IMR-90 (cell line): ENCODE measurements at regions of chr4 and their contacts with region 1.

Region 1: GRCh38 chr4:102620697-102621497 is 119.7 kb downstream of the NFKB1 start:
- DNase-seq: peak; percentile 82
- ATAC-seq: peak; percentile 89
- H3K4me3 ChIP-seq: peak overlapping the region; percentile 2; the same call in 1 of the 2 replicates
- H3K27ac ChIP-seq: no peak overlapping the region
- H3K4me1 ChIP-seq: peaks cover 7% of the 10 kb centered on the region
- H3K27me3 ChIP-seq: no peaks in the 10 kb centered on the region
- CTCF ChIP-seq: peak; percentile 72
- POLR2A ChIP-seq: no peak
- RAD21 ChIP-seq: peak; percentile 84

Region 2: DNA sequence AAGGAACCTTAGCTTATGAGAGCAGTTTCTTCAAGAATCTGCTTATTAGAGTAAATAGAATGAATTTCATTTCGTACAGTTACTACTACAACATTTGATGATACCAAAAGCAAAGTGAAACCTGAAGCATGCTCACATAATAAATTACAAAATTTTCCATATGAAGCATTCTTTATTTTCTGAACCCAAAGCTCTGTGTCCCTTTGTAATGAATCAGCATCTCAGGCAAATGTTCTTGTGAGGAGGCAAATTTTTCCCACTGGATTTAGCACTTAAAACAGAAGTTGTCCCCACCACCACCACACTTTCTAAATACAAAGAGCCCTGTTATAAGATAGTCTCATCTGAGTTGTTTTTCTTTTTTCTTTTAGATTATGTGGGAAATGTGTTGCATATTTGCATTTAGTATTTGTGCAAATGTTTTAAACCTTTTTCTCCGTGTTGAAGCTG is 190.4 kb before region 1 on chr4:
- CTCF ChIA-PET with region 1: interaction called, 4 read pairs
- POLR2A ChIA-PET with region 1: no interaction called
- dilution Hi-C with region 1: no loop called
- in situ Hi-C with region 1: no loop called
- intact Hi-C with region 1: loop called (anchors 5 kb)
- DNase-seq: peak; percentile 16
- ATAC-seq: peak; percentile 9
- H3K4me3 ChIP-seq: peak overlapping the region; percentile 61
- H3K27ac ChIP-seq: no peak overlapping the region
- H3K4me1 ChIP-seq: peaks cover 4% of the 10 kb centered on the region; the same call in 1 of the 2 replicates
- H3K27me3 ChIP-seq: no peaks in the 10 kb centered on the region
- CTCF ChIP-seq: no peak
- POLR2A ChIP-seq: no peak
- RAD21 ChIP-seq: no peak

Region 3: DNA sequence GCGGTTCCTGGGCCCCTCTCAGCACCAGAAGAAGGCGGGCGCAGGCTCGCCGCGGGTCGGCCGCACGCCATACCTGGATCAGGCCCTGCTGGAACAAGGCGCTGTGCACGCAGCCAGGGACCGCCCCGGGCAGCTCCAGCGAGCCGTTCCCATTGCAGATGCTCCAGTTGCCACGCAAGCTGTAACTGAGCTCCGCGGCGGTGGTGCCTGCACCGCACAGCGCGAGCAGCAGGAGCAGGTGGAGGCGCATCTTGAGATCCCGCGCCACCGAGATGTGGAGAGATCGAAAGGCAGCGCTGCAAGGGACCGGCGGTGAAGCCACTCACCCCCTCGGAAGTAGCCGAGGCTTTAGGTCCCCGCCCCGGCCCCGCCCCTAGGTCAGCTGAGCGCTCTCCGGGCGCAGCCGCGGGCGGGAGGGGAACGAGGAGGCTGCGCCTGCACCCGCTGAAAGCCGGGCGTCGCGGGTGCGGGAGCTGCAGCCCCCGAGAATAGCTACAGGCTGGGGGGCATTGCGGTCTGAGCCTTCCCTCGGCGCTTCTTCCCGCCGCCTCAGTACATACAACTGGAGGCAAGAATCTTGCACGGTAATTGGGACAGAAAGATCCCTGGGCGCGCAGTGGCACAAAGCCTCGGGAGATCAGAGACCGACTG is 139.9 kb after region 1 on chr4 and contains the start of gene MANBA:
- CTCF ChIA-PET with region 1: interaction called, 4 read pairs
- POLR2A ChIA-PET with region 1: no interaction called
- dilution Hi-C with region 1: no loop called
- in situ Hi-C with region 1: no loop called
- intact Hi-C with region 1: loop called (anchors 5 kb)
- DNase-seq: peak; percentile 69
- ATAC-seq: peak; percentile 98
- H3K4me3 ChIP-seq: peak within 1 kb of the TSS; percentile 93
- H3K27ac ChIP-seq: peak within 1 kb of the TSS; percentile 67
- H3K4me1 ChIP-seq: peaks cover 5% of the 10 kb centered on the region
- H3K27me3 ChIP-seq: no peaks in the 10 kb centered on the region
- CTCF ChIP-seq: no peak
- POLR2A ChIP-seq: peak; percentile 58; the same call in 1 of the 2 replicates
- RAD21 ChIP-seq: no peak
- total RNA-seq, gene MANBA: 17.2 and 18.3 TPM in 2 replicates

Region 4: GRCh38 chr4:103008875-103009729 is 388.2 kb after region 1 on chr4:
- CTCF ChIA-PET with region 1: interaction called, 10 read pairs
- POLR2A ChIA-PET with region 1: no interaction called
- dilution Hi-C with region 1: loop called (anchors 25 kb)
- in situ Hi-C with region 1: loop called (anchors 5 kb)
- intact Hi-C with region 1: loop called (anchors 1 kb)
- DNase-seq: peak; percentile 80
- ATAC-seq: peak; percentile 82
- H3K4me3 ChIP-seq: no peak overlapping the region
- H3K27ac ChIP-seq: no peak overlapping the region
- H3K4me1 ChIP-seq: peaks cover 10% of the 10 kb centered on the region
- H3K27me3 ChIP-seq: no peaks in the 10 kb centered on the region; the same call in 1 of the 2 replicates
- CTCF ChIP-seq: peak; percentile 91
- POLR2A ChIP-seq: no peak
- RAD21 ChIP-seq: peak; percentile 96

Region 5: DNA sequence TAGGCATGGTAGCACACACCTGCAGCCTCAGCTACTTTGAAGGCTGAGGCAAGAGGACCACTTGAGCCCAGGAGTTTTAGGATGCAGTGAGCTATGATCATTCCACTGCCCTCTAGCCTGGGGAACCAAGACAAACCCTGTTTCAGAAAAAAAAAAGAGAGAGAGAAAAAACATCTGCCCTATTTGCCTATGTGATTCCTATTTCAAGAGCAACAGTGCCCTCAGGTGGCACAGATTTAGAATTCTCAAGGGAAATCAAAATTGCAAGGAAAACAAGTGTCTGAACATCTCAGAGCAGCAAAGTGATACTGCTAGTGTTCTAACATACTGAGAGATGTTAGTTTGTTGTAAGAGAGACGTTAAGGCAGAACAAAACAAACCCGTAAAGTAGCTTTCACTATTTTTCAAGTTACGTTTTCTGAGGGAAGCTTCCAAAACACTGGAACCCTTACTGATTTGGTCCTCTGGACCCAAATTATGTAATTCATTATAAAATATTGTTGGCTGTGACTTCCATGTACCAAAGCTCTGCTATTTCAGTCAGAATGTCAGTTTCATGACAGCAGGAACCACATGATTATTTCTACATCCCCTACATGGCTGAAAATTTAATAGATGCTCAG is 470.8 kb after region 1 on chr4:
- CTCF ChIA-PET with region 1: interaction called, 3 read pairs
- POLR2A ChIA-PET with region 1: no interaction called
- dilution Hi-C with region 1: no loop called
- in situ Hi-C with region 1: loop called (anchors 5 kb)
- intact Hi-C with region 1: loop called (anchors 1 kb)
- DNase-seq: peak; percentile 79
- ATAC-seq: peak; percentile 77
- H3K4me3 ChIP-seq: no peak overlapping the region
- H3K27ac ChIP-seq: no peak overlapping the region
- H3K4me1 ChIP-seq: peaks cover 2% of the 10 kb centered on the region; the same call in 1 of the 2 replicates
- H3K27me3 ChIP-seq: no peaks in the 10 kb centered on the region
- CTCF ChIP-seq: peak; percentile 85
- POLR2A ChIP-seq: no peak
- RAD21 ChIP-seq: peak; percentile 88